Endothelial cell of umbilical vein (primary cell): ENCODE measurements at regions of chr7 and their contacts with region 1.

Region 1: GRCh38 chr7:435630-436366 is 83.8 kb downstream of the PDGFA start:
- DNase-seq: peak; percentile 38
- H3K4me3 ChIP-seq: no peak overlapping the region
- H3K27ac ChIP-seq: no peak overlapping the region
- H3K4me1 ChIP-seq: peaks cover 8% of the 10 kb centered on the region
- H3K27me3 ChIP-seq: no peaks in the 10 kb centered on the region
- CTCF ChIP-seq: no peak
- POLR2A ChIP-seq: no peak

Region 2: DNA sequence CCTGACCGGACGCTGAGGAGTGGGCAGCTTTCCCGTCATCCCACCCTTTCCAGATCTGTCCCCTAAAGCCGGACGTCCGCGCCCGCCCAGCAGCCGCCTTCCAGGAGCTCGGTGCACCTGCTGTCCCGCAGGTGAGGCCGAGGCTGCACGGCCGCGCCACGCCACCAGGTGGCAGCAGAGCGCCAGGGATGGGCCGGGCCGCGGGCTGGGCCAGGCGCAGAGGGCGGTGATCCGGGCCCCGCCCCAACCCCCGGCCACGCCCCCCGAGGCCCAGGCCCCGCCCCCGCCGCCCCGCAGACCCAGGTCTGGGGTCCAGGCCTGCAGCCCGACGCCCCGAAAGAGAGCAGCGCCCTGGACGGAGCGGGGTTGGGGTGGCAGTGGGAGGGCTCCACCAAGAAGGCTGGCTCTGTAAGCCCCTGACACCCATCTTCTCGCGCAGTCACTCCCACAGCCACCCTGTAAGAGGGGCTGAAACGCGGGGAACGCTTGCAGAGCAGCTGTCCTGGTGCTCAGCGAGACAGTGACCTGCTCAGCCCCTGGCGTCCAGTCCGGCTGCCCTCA is 113.6 kb before region 1 on chr7:
- CTCF ChIA-PET with region 1: no interaction called
- POLR2A ChIA-PET with region 1: no interaction called
- dilution Hi-C with region 1: no loop called
- intact Hi-C with region 1: no loop called
- DNase-seq: peak; percentile 41
- H3K4me3 ChIP-seq: no peak overlapping the region
- H3K27ac ChIP-seq: no peak overlapping the region
- H3K4me1 ChIP-seq: no peaks in the 10 kb centered on the region
- H3K27me3 ChIP-seq: peaks cover 0 to 11% of the 10 kb centered on the region in 2 experiments
- CTCF ChIP-seq: peak; percentile 73 to 79
- POLR2A ChIP-seq: no peak

Region 3: DNA sequence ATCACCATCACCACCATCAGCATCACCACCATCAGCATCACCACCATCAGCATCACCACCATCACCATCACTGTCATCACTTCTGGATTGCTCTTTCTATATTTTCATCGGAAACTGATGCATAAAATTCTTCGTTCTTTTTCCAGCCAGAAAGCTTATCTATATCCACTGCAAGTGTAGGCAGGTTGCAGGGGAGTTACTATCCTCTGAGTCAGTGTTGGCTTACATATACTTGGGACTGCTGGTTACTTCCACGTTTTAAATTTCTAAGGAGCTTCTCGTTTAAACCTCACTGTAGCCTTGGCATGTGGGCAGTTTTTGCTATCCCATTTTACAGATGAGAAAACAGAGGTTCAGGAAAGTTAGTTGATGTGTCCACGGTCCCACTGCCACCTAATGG is 79.7 kb before region 1 on chr7:
- CTCF ChIA-PET with region 1: no interaction called
- POLR2A ChIA-PET with region 1: no interaction called
- dilution Hi-C with region 1: no loop called
- intact Hi-C with region 1: no loop called
- DNase-seq: no peak
- H3K4me3 ChIP-seq: no peak overlapping the region
- H3K27ac ChIP-seq: no peak overlapping the region
- H3K4me1 ChIP-seq: peaks cover 20% of the 10 kb centered on the region
- H3K27me3 ChIP-seq: no peaks in the 10 kb centered on the region
- CTCF ChIP-seq: no peak
- POLR2A ChIP-seq: no peak

Region 4: DNA sequence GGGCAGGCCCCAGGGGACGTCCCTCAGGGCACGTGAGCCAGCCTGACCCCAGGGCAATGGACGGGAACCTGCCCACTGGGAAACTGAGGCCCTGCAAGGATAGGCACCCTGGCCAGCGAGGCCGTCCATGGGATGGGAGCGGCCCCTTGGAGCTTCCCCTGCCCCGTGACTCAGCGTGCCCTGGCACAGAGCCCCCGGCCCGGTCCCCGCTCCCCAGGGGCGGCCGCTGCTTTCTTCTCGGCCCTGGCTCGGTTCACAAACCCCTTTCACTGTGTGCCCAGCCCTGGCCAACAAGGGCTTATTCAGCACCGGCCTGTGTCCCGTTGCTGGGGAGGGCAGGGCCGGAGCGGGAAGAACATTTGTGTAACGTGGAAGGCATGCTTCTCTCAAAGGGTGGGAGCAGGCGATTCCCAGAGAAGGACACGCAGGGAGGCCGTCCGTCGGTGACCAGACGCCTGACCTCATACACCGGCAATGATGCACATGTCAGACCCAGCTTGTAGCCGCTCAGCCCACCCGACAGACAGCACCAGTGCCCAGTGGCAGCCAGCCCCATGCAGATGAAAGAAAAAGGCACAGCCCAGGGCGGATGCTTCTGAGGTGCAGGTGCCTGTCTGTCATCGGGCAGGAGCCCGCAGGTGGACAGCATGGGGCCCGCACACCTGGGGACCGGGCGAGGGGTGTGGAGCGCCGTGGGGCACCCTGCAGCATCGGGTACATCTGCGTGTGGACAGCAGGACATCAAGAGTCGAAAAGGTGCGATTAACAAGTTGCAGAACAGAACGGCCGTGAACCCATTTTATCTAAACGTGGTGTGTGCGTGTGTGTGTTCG is 10.6 kb before region 1 on chr7:
- CTCF ChIA-PET with region 1: no interaction called
- POLR2A ChIA-PET with region 1: no interaction called
- dilution Hi-C with region 1: no loop called
- intact Hi-C with region 1: no loop called
- DNase-seq: no peak
- H3K4me3 ChIP-seq: no peak overlapping the region
- H3K27ac ChIP-seq: no peak overlapping the region
- H3K4me1 ChIP-seq: no peaks in the 10 kb centered on the region
- H3K27me3 ChIP-seq: no peaks in the 10 kb centered on the region
- CTCF ChIP-seq: no peak
- POLR2A ChIP-seq: no peak

Region 5: GRCh38 chr7:460374-461116 is 24.7 kb after region 1 on chr7:
- CTCF ChIA-PET with region 1: interaction called, 13 read pairs
- POLR2A ChIA-PET with region 1: no interaction called
- dilution Hi-C with region 1: no loop called
- intact Hi-C with region 1: no loop called
- DNase-seq: peak; percentile 53
- H3K4me3 ChIP-seq: no peak overlapping the region
- H3K27ac ChIP-seq: peak overlapping the region; percentile 66
- H3K4me1 ChIP-seq: peaks cover 38% of the 10 kb centered on the region
- H3K27me3 ChIP-seq: no peaks in the 10 kb centered on the region
- CTCF ChIP-seq: no peak
- POLR2A ChIP-seq: no peak

Region 6: GRCh38 chr7:503575-504111 is 67.8 kb after region 1 on chr7:
- CTCF ChIA-PET with region 1: no interaction called
- POLR2A ChIA-PET with region 1: no interaction called
- dilution Hi-C with region 1: no loop called
- intact Hi-C with region 1: loop called (anchors 5 kb)
- DNase-seq: no peak
- H3K4me3 ChIP-seq: no peak overlapping the region
- H3K27ac ChIP-seq: no peak overlapping the region
- H3K4me1 ChIP-seq: no peaks in the 10 kb centered on the region
- H3K27me3 ChIP-seq: no peaks in the 10 kb centered on the region
- CTCF ChIP-seq: no peak
- POLR2A ChIP-seq: no peak